Natural killer cell (primary cell): ENCODE measurements at regions of chr6 and their contacts with region 1.

Region 1: GRCh38 chr6:48962041-48962440 is 501.0 kb downstream of the MMUT start:
- DNase-seq: no peak
- ATAC-seq: no peak
- H3K4me3 ChIP-seq: no peak overlapping the region
- H3K4me3 Mint-ChIP-seq: no peak overlapping the region
- H3K27ac ChIP-seq: no peak overlapping the region
- H3K27ac Mint-ChIP-seq: no peak overlapping the region
- H3K4me1 ChIP-seq: no peaks in the 10 kb centered on the region
- H3K4me1 Mint-ChIP-seq: no peaks in the 10 kb centered on the region
- H3K27me3 ChIP-seq: no peaks in the 10 kb centered on the region
- H3K27me3 Mint-ChIP-seq: no peaks in the 10 kb centered on the region
- CTCF ChIP-seq: no peak

Region 2: GRCh38 chr6:48973491-48973890 is 11.4 kb after region 1 on chr6:
- intact Hi-C with region 1: loop called (anchors 1 kb)
- DNase-seq: no peak
- ATAC-seq: no peak
- H3K4me3 ChIP-seq: no peak overlapping the region
- H3K4me3 Mint-ChIP-seq: no peak overlapping the region
- H3K27ac ChIP-seq: no peak overlapping the region
- H3K27ac Mint-ChIP-seq: no peak overlapping the region
- H3K4me1 ChIP-seq: no peaks in the 10 kb centered on the region
- H3K4me1 Mint-ChIP-seq: no peaks in the 10 kb centered on the region
- H3K27me3 ChIP-seq: no peaks in the 10 kb centered on the region
- H3K27me3 Mint-ChIP-seq: no peaks in the 10 kb centered on the region
- CTCF ChIP-seq: no peak